ENCODE measurements at regions of chr2 and their contacts with region 1.

Region 1: DNA sequence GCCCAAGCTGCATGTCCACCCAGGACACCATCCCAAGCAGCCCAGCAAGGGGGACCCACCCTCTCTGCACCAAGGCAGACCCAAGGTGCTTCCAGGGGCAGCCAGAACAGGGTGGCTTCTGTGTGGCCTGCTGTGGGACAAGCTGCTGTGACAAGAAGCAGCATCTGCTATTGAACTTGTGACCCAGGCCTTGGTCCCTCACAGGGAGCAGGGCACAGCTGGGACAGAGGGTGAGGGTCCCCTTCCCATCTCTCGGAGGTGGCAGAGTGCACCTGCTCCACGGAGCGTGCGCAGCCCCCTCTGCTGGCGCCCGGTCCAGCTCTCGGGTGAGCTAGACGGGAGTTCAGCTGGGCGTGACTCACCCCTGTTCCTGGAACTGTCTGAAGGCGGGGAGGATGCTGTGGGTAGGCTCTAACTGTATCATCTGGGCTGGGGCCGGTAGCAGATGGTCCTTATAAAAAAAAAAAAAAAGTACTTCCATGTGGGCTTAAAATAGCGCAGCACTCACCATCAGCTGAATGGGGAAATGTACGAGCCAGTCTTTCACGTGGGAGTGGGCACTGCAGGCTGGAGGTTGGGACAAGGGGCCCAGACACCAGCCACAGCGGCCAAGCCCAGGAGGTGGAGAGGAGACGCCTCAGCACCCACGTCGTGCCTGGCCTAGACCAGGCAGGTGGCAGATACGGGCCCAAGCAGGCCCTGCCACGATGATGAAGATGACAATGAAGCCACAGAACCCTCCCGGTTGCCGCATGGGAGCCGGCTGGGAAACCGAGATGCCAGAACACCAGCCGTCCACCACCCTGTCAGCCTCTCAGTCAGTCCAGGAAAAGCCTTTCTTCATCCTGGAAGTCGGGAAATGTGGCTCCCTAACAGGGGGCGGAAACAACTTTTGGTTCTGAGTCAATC is 136.8 kb upstream of the ID2 start:
- DNase-seq: peak; percentile 84
- H3K4me3 Mint-ChIP-seq: no peak overlapping the region
- H3K27ac Mint-ChIP-seq: peak overlapping the region; percentile 99
- H3K4me1 Mint-ChIP-seq: peaks cover 80% of the 10 kb centered on the region
- H3K27me3 Mint-ChIP-seq: no peaks in the 10 kb centered on the region

Region 2: DNA sequence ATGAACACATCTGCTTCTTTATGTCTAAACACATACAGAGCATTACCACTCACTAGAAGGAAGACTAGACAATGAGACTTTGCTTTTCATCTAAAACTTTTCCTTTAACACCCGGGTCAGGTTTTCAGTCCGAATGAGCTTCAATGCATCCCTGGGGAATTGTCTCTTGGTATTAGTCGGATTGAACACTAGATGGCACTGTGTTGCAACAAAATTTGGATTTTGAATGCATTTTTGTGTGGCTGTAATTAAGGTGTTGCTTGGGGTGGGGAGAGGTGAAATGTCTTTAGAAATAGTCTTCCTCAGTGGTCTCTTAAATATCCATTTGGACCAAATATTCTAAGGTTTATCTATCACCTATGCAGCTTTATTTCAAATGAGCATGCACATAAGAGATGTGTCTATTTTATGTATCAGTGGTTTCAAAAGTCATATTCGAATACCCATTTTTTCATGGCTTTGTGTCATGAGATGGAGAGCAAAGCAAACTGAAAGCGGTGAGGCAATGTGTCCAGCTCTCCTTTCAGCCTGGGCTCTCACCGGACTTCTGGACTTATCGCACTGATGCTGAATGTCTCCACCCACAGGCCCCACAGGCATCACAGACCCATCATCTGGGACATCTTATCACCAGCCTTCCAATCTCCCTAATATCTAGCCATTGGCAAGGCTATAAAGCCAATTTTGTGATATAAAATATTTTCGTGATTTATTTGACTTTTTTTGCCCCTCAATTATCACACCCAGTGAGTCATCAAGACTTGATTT is 1117.6 kb before region 1 on chr2:
- intact Hi-C with region 1: loop called (anchors 5 kb)
- DNase-seq: no peak
- H3K4me3 Mint-ChIP-seq: peak overlapping the region; percentile 49
- H3K27ac Mint-ChIP-seq: peak overlapping the region; percentile 78
- H3K4me1 Mint-ChIP-seq: peaks cover 45% of the 10 kb centered on the region
- H3K27me3 Mint-ChIP-seq: no peaks in the 10 kb centered on the region

Region 3: DNA sequence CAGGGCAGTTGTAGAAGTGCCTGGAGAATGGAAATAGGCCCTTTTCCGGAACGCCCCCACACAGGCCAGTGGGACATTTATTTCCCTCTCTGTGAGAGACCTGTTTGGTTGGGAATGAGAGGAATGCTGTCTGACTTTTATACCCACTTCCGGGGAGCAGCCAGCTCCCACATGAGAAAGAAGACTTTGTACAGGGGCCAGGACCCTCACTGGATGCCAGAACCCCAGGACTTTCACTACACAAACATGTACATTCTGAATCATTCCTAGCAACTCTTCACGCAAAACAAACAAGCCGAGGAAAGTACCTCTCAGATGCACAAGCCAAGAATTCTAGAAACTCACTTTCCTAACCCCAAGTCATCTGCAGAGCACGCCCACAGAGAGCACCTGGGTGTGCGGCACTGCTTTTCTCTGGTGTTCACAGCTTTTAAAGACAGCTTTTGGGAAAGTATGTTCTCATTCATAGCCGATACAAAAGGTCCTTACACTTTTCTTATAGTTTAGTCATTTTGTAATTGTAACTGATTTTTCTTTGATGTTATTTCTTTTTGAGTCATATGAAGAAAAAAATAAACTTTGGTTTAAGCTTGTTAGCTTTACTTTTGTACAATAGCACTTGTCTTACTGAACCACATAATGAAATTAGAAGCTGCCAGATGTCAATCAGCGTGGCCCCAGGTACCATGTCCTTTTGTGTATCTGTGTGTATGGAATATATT is 719.3 kb before region 1 on chr2:
- intact Hi-C with region 1: loop called (anchors 2 kb)
- DNase-seq: peak; percentile 46
- H3K4me3 Mint-ChIP-seq: peak overlapping the region; percentile 31
- H3K27ac Mint-ChIP-seq: peak overlapping the region; percentile 94
- H3K4me1 Mint-ChIP-seq: peaks cover 43% of the 10 kb centered on the region
- H3K27me3 Mint-ChIP-seq: no peaks in the 10 kb centered on the region

Region 4: GRCh38 chr2:8049851-8050571 is 495.0 kb before region 1 on chr2:
- intact Hi-C with region 1: loop called (anchors 1 kb)
- DNase-seq: peak; percentile 63
- H3K4me3 Mint-ChIP-seq: peak overlapping the region; percentile 30
- H3K27ac Mint-ChIP-seq: peak overlapping the region; percentile 86
- H3K4me1 Mint-ChIP-seq: peaks cover 53% of the 10 kb centered on the region
- H3K27me3 Mint-ChIP-seq: no peaks in the 10 kb centered on the region

Region 5: DNA sequence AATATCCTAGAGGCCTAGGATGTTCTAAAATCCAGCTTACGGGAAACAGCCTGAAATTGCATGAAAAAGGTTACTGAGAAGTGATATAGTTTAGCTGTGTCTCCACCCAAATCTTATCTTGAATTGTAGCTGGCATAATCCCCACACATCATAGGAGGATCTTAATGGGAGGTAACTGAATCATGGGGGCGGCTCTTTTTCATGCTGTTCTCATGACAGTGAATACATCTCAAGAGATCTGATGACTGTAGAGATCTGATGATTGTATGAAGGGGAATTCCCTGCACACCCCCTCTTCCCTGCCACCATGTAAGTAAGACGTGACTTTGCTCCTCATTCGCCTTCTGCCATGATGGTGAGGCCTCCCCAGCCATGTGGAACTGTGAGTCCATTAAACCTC is 248.7 kb before region 1 on chr2:
- intact Hi-C with region 1: no loop called
- DNase-seq: no peak
- H3K4me3 Mint-ChIP-seq: no peak overlapping the region
- H3K27ac Mint-ChIP-seq: peak overlapping the region; percentile 1
- H3K4me1 Mint-ChIP-seq: peaks cover 51% of the 10 kb centered on the region
- H3K27me3 Mint-ChIP-seq: peaks cover 13% of the 10 kb centered on the region

Region 6: DNA sequence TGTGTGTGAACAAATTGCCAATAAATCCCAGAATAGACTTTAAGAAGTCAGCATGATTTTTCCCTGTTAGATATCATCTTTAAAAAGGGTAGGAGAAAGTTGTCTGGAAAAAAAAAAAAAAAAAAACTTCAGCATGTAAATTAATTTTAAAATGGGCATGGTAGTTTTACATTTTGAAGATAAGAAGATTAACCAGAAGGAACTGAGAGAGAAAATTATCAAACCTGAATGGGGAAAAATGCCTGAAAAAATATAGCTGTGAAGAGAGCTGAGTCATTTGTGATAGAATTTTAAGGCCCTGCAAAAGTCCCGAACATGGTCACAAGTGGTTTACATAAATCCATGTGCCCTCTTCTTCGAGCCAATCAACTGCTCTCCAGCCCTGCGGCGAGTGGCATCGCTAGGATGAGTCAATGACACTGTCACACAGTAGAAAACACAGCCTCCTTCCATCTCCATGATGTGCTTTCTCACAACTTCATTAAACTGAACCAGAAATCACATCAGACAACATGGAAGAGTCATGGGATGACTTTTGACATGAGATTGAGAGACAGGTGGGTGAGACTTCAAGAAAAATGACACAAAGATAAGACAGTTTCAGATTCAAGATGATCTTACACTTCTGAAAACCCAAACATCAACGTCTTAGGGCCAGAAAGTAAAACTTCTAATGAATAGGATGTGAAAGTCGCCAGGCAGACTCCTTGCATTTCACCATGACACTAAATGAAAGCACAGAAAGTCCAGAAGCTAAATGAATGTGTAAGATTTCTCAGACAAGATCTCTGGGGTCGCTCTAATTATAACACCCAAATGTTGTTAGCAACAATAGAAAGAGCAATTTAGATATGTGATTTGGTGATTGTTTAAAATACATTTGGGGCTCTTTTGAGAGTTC is 136.2 kb before region 1 on chr2:
- intact Hi-C with region 1: loop called (anchors 1 kb)
- DNase-seq: peak; percentile 43
- H3K4me3 Mint-ChIP-seq: no peak overlapping the region
- H3K27ac Mint-ChIP-seq: peak overlapping the region; percentile 79
- H3K4me1 Mint-ChIP-seq: peaks cover 36% of the 10 kb centered on the region
- H3K27me3 Mint-ChIP-seq: peaks cover 24% of the 10 kb centered on the region

Region 7: DNA sequence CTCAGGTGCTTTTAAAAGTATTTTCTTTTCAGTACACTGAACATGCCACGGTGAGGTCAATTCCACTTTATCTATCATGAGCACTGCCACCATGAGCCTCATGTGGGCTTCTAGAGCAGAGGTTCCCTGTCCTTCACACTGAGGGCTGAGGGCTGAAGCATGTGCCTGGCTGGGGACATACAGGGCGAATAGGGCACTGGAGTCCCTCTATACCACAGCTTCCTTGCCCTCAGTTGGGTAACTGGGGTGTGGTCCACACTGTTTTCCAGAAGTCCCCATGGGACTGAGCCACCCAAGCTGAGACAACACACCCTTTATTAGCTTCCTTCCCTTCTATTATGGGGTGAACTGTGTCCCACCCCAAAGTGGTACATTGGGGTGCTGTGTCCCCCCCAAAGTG is 35.4 kb before region 1 on chr2:
- intact Hi-C with region 1: no loop called
- DNase-seq: no peak
- H3K4me3 Mint-ChIP-seq: no peak overlapping the region
- H3K27ac Mint-ChIP-seq: no peak overlapping the region
- H3K4me1 Mint-ChIP-seq: peaks cover 26% of the 10 kb centered on the region
- H3K27me3 Mint-ChIP-seq: no peaks in the 10 kb centered on the region

Region 8: DNA sequence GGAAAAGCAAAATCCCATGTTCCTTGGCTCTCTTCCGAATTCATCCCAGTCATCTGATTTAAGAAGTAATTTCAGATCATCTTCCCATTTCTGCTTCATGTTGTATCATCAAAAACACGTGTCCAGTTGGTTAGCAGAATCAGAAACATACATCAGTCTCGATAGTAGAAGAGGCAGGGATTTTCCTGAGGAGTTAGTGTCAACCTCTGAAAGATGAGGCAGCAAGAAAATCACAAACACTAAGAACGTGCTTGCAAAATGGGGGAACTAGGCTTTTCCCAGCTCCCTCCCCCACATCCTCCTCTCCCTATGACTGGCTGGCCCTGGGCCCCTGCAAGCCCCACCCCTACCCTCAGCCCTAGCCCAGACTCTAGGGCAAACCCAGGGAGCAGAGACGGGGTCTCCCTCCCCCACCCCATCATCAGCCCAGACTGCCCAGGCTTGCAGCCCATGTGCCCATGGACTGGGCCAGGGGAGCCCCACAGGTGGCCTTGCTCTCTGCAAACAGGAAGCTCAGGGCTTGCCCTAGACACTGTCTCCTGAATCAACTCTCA is 24.2 kb before region 1 on chr2:
- intact Hi-C with region 1: loop called (anchors 1 kb)
- DNase-seq: no peak
- H3K4me3 Mint-ChIP-seq: no peak overlapping the region
- H3K27ac Mint-ChIP-seq: peak overlapping the region; percentile 48
- H3K4me1 Mint-ChIP-seq: peaks cover 58% of the 10 kb centered on the region
- H3K27me3 Mint-ChIP-seq: no peaks in the 10 kb centered on the region

Region 9: DNA sequence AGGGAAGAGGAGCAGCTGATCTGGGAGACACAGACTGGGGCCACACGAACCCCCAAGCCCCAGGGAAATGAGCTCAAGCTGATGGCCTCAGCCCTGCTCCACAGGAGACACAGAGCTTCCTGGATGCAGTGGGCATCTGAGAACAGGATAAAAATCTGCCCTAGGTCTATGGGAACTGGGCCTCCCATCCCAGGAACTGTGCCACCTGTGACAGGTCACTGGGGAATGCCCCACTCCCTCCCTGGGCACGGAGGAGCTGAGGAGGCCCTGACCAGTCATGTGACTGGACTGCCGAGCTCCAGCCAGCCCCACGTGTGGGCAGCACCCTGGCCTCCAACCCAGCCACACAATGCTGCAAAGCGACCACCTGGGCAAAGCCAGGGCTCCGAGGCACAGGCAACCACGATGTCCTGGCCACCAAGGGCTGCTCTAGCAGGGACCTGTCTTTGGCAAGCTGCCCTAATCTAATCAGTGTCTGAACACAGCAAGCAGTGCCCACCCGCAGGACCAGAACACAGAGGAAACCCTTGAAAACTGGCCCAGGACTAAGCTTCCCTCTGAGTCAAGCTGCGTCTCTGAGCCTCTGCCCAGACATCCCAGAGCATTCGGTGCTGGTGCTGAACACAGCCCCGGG is 79.0 kb after region 1 on chr2:
- intact Hi-C with region 1: no loop called
- DNase-seq: no peak
- H3K4me3 Mint-ChIP-seq: no peak overlapping the region
- H3K27ac Mint-ChIP-seq: no peak overlapping the region
- H3K4me1 Mint-ChIP-seq: peaks cover 3% of the 10 kb centered on the region
- H3K27me3 Mint-ChIP-seq: peaks cover 31% of the 10 kb centered on the region